ENCODE measurements at regions of chr9 and their contacts with region 1.

Region 1: DNA sequence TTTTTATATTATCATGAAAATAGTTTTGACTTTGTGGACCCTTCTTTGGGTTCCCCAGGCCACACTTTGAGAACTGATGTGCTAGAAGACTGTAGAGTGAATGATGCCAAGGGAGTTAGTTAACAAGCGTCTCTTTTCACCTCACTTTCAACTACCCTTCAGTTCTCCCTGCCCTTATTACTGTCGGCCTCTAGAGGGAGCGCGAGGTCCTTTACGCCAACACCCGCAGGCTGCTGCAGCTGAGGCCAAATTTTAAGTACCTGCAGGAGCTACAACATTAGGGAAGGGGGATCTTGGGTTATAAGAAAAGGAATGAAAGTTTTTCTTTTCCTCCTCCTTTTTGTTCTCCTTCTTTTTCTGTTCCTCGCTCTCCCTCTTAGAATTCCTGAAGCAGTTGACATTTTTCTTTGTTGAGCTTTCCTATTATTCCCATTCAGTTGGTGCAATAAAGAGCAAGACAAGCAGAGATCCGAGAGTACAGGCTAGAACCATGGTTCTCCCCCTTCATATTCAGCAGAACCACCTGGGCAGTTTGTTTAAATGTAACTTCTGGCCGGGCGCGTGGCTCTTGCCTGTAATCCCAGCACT is 84.0 kb downstream of the ZFAND5 start:
- DNase-seq: peak; percentile 79
- H3K4me3 Mint-ChIP-seq: no peak overlapping the region
- H3K27ac Mint-ChIP-seq: no peak overlapping the region
- H3K4me1 Mint-ChIP-seq: no peaks in the 10 kb centered on the region
- H3K27me3 Mint-ChIP-seq: no peaks in the 10 kb centered on the region

Region 2: GRCh38 chr9:72038890-72039410 is 242.1 kb before region 1 on chr9:
- CTCF ChIA-PET with region 1: interaction called, 223 read pairs
- POLR2A ChIA-PET with region 1: no interaction called
- intact Hi-C with region 1: no loop called
- DNase-seq: peak; percentile 80
- H3K4me3 Mint-ChIP-seq: no peak overlapping the region
- H3K27ac Mint-ChIP-seq: no peak overlapping the region
- H3K4me1 Mint-ChIP-seq: peaks cover 5% of the 10 kb centered on the region
- H3K27me3 Mint-ChIP-seq: peaks cover 4% of the 10 kb centered on the region

Region 3: DNA sequence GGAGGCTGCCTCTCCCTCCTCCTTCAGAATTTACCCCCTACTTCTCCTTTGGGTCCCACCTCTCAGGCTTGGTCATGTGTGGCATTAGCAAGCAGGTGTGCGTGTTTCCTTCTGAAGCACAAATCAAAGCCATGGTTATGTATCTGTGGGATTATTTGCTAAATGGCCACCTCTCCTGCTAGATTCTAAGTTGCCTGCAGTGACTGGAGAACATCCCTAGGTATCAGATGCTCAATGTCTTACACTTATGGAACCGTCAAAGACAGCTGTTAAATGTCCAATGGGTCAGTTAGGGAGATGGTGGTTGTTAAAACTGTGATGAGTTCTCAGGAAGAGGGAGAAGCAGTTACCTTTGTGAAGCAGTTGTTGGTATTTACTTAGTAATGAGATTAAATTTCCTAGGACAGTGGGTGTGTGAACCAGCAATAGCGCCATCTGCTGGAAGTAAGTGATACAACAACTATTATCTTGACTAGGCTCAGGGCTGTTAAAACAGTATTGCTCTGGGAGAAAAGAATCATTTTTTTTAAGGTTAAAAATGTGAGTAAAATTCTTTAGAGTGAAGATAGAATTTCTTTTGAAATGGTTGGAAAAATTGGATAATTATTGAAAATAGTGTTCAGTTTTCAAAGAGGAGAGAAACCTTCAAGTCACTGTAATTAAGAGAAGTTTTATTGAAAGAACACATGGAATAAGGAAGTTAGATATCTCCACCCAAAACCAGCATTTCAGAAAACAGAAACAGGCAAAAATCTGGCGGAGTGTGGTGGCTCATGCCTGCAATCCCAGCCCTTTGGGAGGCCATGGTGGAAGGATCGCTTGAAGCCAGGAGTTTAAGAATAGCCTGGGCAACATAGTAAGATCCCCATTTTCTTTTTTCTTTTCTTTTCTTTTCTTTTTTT is 311.7 kb after region 1 on chr9:
- CTCF ChIA-PET with region 1: interaction called, 105 read pairs
- POLR2A ChIA-PET with region 1: no interaction called
- intact Hi-C with region 1: loop called (anchors 1 kb)
- DNase-seq: peak; percentile 30
- H3K4me3 Mint-ChIP-seq: no peak overlapping the region
- H3K27ac Mint-ChIP-seq: no peak overlapping the region
- H3K4me1 Mint-ChIP-seq: peaks cover 28% of the 10 kb centered on the region
- H3K27me3 Mint-ChIP-seq: no peaks in the 10 kb centered on the region

Region 4: GRCh38 chr9:72753266-72753893 is 472.4 kb after region 1 on chr9:
- CTCF ChIA-PET with region 1: interaction called, 13 read pairs
- POLR2A ChIA-PET with region 1: no interaction called
- intact Hi-C with region 1: no loop called
- DNase-seq: no peak
- H3K4me3 Mint-ChIP-seq: no peak overlapping the region
- H3K27ac Mint-ChIP-seq: no peak overlapping the region
- H3K4me1 Mint-ChIP-seq: no peaks in the 10 kb centered on the region
- H3K27me3 Mint-ChIP-seq: peaks cover 11% of the 10 kb centered on the region

Region 5: DNA sequence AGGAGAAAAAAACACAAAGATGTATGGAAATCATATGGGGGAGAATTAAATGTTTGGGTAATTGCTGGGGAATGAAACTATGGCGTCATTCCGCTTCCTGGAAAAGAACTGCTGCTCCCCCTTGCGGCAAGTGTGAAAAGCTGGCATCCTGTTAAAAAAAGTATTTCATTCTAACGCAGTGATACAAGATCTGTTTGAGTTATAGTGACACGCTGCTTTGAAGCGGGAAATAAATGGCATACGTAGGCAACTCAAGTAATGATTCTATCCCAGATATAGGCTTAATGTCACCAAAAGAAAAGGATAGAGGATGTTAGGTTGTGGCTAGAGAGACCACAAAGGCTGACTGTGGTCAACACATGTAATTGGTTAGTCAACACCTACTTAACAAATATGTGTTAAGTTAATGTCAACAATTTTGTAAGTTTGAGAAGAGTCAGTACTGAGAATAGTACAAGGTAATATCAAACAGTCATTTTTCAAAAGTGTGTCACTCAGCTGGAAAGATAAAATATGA is 742.1 kb after region 1 on chr9:
- CTCF ChIA-PET with region 1: interaction called, 19 read pairs
- POLR2A ChIA-PET with region 1: no interaction called
- intact Hi-C with region 1: loop called (anchors 1 kb)
- DNase-seq: peak; percentile 60
- H3K4me3 Mint-ChIP-seq: no peak overlapping the region
- H3K27ac Mint-ChIP-seq: no peak overlapping the region
- H3K4me1 Mint-ChIP-seq: peaks cover 9% of the 10 kb centered on the region
- H3K27me3 Mint-ChIP-seq: peaks cover 10% of the 10 kb centered on the region

Measured in activated CD4-positive, alpha-beta memory T cell treated with anti-CD3 and anti-CD28 coated beads for 36 hours (primary cell).